MCF 10A (cell line): ENCODE measurements at regions of chr2 and their contacts with region 1.

Region 1: DNA sequence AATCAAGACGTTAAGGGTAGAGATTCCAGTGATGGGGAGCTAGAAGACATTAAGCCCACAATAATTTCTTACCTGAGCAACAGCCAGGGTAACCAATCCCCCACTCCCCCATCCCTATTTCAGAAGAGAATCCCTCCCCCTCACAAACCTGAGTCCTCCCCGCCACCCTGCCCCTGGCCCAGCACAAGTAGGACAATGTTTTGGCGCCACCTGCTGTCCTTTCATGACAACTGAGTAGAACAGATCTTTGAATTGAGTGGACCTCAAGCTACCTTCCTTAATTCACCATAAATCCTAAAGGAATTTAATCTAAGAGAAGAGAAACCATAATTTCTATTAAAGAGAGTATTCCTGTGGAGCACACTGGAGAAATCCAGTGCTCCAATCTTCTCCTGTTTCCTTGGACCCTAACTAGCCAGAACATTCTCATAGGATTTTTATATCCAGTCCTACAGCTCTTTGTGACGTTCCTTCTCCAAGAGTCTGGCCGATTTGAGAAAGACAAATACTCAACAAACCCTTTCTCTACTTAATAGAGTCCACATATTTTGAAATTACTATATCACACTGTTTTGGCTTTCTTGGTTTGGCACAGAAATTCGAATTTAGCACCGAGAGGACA is 41.1 kb downstream of the NHEJ1 start:
- DNase-seq: peak; percentile 75
- H3K4me3 Mint-ChIP-seq: no peak overlapping the region
- H3K27ac Mint-ChIP-seq: no peak overlapping the region
- H3K4me1 Mint-ChIP-seq: peaks cover 15% of the 10 kb centered on the region
- H3K27me3 Mint-ChIP-seq: no peaks in the 10 kb centered on the region
- CTCF ChIP-seq: peak; percentile 74

Region 2: GRCh38 chr2:218995972-218996711 is 123.4 kb before region 1 on chr2:
- CTCF ChIA-PET with region 1: interaction called, 37 read pairs
- POLR2A ChIA-PET with region 1: interaction called, 6 read pairs
- intact Hi-C with region 1: loop called (anchors 1 kb)
- DNase-seq: peak; percentile 82
- H3K4me3 Mint-ChIP-seq: peak overlapping the region; percentile 73
- H3K27ac Mint-ChIP-seq: no peak overlapping the region
- H3K4me1 Mint-ChIP-seq: peaks cover 15% of the 10 kb centered on the region
- H3K27me3 Mint-ChIP-seq: peaks cover 22% of the 10 kb centered on the region
- CTCF ChIP-seq: peak; percentile 84

Region 3: DNA sequence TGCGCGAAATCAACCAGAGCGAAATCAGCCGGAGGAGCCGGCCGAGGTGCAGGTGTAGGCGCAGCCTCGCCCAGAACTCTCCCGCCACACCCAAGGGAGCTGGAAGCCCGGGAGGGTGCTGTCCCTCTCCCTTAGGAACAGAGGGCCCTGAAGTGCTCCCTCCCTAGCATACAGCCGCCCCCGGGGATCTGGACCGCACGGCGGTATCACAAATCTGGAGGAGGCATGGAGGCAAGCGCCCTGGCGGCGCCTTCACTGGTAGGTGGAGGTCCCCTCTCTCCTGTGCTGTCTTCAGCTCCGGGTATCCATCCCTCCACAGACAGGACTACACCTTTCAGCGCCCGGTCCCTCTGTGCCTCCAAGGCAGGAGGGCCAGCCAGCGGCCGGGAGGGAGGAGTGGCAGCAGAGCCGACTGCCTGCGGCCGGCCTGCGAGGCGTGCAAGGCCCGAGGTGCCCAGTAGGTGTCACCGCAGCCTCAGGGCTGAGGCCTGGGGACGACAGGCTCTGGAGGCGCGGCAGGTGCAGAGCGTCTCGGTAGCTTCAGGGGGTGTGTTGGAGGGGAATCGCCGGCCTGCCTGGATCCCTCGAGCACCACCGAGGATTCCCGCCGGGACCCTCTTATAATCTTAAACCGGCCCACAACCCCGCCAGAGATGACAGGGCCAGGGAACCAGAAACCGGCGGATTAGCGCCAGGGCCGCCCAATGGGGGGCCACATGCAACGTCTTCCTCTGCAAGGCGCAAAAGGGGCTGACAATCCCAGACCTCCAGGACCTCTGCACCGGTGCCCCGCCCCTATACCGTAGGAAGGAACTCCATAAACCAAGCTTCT is 61.6 kb before region 1 on chr2:
- CTCF ChIA-PET with region 1: interaction called, 57 read pairs
- POLR2A ChIA-PET with region 1: interaction called, 4 read pairs
- intact Hi-C with region 1: loop called (anchors 1 kb)
- DNase-seq: peak; percentile 51
- H3K4me3 Mint-ChIP-seq: no peak overlapping the region
- H3K27ac Mint-ChIP-seq: no peak overlapping the region
- H3K4me1 Mint-ChIP-seq: no peaks in the 10 kb centered on the region
- H3K27me3 Mint-ChIP-seq: peaks cover 63% of the 10 kb centered on the region
- CTCF ChIP-seq: peak; percentile 95

Region 4: GRCh38 chr2:219079417-219079816 is 40.1 kb before region 1 on chr2:
- CTCF ChIA-PET with region 1: interaction called, 34 read pairs
- POLR2A ChIA-PET with region 1: no interaction called
- intact Hi-C with region 1: loop called (anchors 5 kb)
- DNase-seq: peak; percentile 8
- H3K4me3 Mint-ChIP-seq: no peak overlapping the region
- H3K27ac Mint-ChIP-seq: no peak overlapping the region
- H3K4me1 Mint-ChIP-seq: no peaks in the 10 kb centered on the region
- H3K27me3 Mint-ChIP-seq: no peaks in the 10 kb centered on the region
- CTCF ChIP-seq: no peak

Region 5: DNA sequence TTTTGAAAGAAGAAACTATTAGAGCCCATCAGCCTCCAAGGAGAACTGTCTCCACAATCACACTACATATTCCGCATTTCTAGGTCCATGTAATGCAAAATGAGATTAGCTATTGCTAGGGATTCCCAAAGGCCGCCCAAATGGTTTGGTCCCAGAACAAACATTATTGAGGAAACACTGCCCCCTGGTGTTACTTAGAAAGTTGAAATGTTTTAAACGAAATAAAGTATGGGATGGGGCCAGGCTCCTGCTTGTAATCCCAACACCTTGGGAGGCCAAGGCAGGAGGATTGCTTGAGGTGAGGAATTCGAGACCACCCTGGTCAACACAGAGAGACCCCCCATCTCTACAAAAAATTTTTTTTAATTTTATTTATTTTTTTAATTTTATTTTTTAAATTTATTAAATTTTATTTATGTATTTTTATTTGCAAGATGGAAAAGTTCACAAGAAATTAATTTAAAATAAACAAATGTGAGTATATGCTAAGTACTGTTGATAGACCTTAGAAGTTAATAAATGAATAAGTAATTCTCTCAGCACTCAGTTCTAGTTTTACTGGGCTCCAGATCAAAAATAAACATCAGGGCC is 35.6 kb after region 1 on chr2:
- CTCF ChIA-PET with region 1: interaction called, 11 read pairs
- POLR2A ChIA-PET with region 1: interaction called, 5 read pairs
- intact Hi-C with region 1: loop called (anchors 1 kb)
- DNase-seq: peak; percentile 89
- H3K4me3 Mint-ChIP-seq: no peak overlapping the region
- H3K27ac Mint-ChIP-seq: no peak overlapping the region
- H3K4me1 Mint-ChIP-seq: peaks cover 7% of the 10 kb centered on the region
- H3K27me3 Mint-ChIP-seq: no peaks in the 10 kb centered on the region
- CTCF ChIP-seq: peak; percentile 43

Region 6: DNA sequence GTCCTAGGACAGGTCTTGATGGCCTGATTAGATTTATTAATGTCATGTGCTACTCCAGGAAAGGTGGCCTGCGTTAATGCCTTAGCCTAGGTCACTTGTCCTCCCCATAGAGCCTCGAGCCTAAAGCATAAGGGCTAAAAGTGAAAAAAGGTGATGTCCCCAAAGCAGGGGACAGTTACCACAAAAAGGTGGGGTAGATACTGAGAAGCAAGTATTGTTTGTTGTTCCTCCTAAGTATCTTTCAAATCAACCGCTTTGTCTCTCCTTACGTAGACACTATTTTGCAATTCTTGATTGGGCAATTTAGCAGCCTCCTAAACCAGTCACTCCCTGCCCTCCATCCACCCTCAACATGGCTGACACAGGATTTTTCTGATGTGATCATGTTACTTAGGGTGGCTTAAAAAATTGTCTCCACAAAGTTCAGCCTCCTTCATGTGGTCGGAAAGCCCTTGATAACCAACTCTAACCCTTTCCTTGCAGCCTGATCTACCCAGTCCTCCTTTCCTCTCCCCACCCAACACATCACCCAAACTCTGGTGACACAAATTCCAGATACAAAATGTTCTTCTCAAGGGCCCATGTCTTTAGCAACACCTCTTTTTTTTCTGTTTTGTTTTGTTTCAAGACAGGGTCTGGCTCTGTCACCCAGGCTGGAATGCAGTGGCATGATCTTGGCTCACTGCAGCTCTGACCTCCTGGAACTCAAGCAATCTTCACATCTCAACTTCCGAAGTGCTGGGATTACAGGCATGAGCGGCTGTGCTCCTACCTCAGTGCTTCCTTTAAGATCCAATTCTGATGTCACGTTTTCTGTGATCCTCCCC is 459.5 kb after region 1 on chr2:
- CTCF ChIA-PET with region 1: no interaction called
- POLR2A ChIA-PET with region 1: no interaction called
- intact Hi-C with region 1: no loop called
- DNase-seq: peak; percentile 74
- H3K4me3 Mint-ChIP-seq: peak overlapping the region; percentile 40
- H3K27ac Mint-ChIP-seq: peak overlapping the region; percentile 78
- H3K4me1 Mint-ChIP-seq: peaks cover 7% of the 10 kb centered on the region
- H3K27me3 Mint-ChIP-seq: no peaks in the 10 kb centered on the region
- CTCF ChIP-seq: no peak